ENCODE measurements at regions of chr5 and their contacts with region 1.

Region 1: DNA sequence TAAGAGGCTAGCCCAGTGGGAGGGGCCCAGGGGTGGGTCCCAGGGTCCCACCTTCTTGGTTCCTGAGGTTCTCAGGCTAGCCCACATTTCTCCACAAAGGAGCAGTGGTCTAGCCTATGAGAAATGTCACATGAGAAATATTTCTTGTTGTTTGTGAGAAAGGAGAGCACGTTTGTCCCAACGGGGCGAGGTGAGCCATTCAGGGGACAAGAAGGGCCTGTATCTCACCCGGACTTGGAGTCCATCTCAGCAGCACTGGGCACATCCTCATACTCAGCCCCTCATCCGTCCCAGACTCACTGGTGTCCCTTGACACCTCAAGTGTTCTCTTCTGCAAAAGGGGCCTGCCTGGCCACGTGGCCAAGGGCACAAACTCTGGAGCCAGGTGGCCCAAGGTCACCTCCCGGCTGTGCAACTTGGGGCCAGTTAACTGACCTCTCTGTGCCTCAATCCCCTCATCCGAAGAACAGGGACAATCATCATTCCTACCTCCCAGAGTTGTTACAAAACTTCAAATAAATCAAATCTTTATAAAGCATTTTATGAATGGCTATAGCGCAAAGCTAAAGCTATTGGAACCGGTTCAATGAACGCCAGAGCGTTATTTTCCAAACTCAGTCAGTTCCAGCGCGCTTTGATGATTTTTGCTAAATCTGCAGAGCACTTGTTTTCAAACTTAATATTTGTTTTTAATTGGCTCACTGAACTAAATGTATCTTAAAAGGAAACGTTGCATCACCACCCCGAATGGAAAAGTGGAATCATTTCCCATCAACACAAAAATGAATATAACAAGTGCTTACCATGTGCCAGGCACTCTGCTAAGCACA is 49.5 kb downstream of the DUSP1 start:
- DNase-seq: no peak
- H3K4me3 ChIP-seq: no peak overlapping the region
- H3K4me3 Mint-ChIP-seq: no peak overlapping the region
- H3K27ac ChIP-seq: no peak overlapping the region
- H3K27ac Mint-ChIP-seq: no peak overlapping the region
- H3K4me1 ChIP-seq: peaks cover 0 to 6% of the 10 kb centered on the region in 2 donors
- H3K4me1 Mint-ChIP-seq: peaks cover 5% of the 10 kb centered on the region
- H3K27me3 ChIP-seq: no peaks in the 10 kb centered on the region
- H3K27me3 Mint-ChIP-seq: peaks cover 2 to 16% (median 10%) of the 10 kb centered on the region in 3 donors
- CTCF ChIP-seq: no peak

Region 2: GRCh38 chr5:172758083-172758833 is 36.7 kb after region 1 on chr5:
- intact Hi-C with region 1: loop called in 1 of 2 experiments (anchors 5 kb)
- DNase-seq: peak; percentile 51 to 91 (median 53)
- H3K4me3 ChIP-seq: no peak overlapping the region
- H3K4me3 Mint-ChIP-seq: no peak overlapping the region
- H3K27ac ChIP-seq: peak overlapping the region in 1 of 2 donors; percentile 53
- H3K27ac Mint-ChIP-seq: peak overlapping the region in 3 of 7 donors; percentile 57 to 72 (median 58)
- H3K4me1 ChIP-seq: no peaks in the 10 kb centered on the region
- H3K4me1 Mint-ChIP-seq: peaks cover 12% of the 10 kb centered on the region
- H3K27me3 ChIP-seq: no peaks in the 10 kb centered on the region
- H3K27me3 Mint-ChIP-seq: peaks cover 0 to 4% (median 3%) of the 10 kb centered on the region in 3 donors
- CTCF ChIP-seq: no peak

Measured in CD14-positive monocyte (primary cell).